Activated CD4-positive, alpha-beta T cell treated with anti-CD3 and anti-CD28 coated beads, Interleukin-2, amount 10 ng/mL, durations not matched to agents 24 days and 14 days (primary cell): ENCODE measurements at regions of chr2 and their contacts with region 1.

Region 1: DNA sequence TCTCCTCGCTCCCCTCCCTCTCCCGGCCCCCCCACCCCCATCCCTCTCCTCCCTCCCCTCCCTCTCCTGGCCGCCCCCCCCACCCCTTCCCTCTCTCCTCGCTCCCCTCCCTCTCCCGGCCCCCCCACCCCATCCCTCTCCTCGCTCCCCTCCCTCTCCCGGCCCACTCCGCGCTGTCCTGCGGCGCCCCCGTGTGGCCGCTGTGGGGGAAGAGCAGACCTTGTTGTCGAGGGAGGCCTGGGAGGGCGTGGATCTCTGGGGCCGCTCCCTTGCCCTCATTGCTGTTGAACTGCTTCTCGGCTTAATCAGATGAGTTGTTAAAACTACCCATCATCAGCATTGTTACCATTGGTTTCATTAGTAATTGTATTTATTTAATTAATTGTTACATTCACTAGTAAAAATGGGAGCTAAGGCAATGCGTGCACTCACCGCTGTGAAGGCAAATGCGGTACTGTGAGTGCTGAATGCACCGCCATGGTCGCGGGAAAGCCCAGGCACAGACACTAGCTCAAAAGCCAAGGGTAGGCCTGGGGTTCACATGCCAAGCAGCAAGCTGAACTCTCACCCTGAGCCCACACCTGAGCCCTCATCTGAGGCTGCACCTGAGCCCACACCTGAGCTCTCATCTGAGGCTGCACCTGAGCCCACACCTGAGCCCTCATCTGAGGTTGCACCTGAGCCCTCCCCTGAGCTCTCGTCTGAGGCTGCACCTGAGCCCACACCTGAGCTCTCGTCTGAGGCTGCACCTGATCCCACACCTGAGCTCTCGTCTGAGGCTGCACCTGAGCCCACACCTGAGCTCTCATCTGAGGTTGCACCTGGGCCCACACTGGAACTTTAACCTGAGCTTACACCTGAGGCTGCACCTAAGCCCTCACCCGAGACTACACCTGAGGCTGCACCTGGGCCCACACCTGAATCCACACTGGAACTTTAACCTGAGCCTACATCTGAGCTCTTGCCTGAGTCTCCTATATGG is 8.8 kb downstream of the RTP5 start:
- DNase-seq: peak; percentile 94
- H3K4me3 Mint-ChIP-seq: no peak overlapping the region
- H3K27ac Mint-ChIP-seq: no peak overlapping the region
- H3K4me1 Mint-ChIP-seq: peaks cover 26% of the 10 kb centered on the region
- H3K27me3 Mint-ChIP-seq: peaks cover 4% of the 10 kb centered on the region

Region 2: GRCh38 chr2:240250985-240251847 is 1627.1 kb before region 1 on chr2:
- intact Hi-C with region 1: no loop called
- DNase-seq: peak; percentile 46
- H3K4me3 Mint-ChIP-seq: no peak overlapping the region
- H3K27ac Mint-ChIP-seq: no peak overlapping the region
- H3K4me1 Mint-ChIP-seq: no peaks in the 10 kb centered on the region
- H3K27me3 Mint-ChIP-seq: no peaks in the 10 kb centered on the region

Region 3: GRCh38 chr2:240560480-240561326 is 1317.6 kb before region 1 on chr2:
- intact Hi-C with region 1: loop called (anchors 10 kb)
- DNase-seq: peak; percentile 100
- H3K4me3 Mint-ChIP-seq: peak overlapping the region; percentile 94
- H3K27ac Mint-ChIP-seq: peak overlapping the region; percentile 94
- H3K4me1 Mint-ChIP-seq: peaks cover 63% of the 10 kb centered on the region
- H3K27me3 Mint-ChIP-seq: no peaks in the 10 kb centered on the region

Region 4: GRCh38 chr2:241508240-241509154 is 369.8 kb before region 1 on chr2 and contains the start of gene STK25:
- intact Hi-C with region 1: loop called (anchors 1 kb)
- DNase-seq: peak; percentile 99
- H3K4me3 Mint-ChIP-seq: peak within 1 kb of the TSS; percentile 87
- H3K27ac Mint-ChIP-seq: peak within 1 kb of the TSS; percentile 72
- H3K4me1 Mint-ChIP-seq: peaks cover 13% of the 10 kb centered on the region
- H3K27me3 Mint-ChIP-seq: peaks cover 7% of the 10 kb centered on the region
- total RNA-seq, gene STK25: 121 and 145 TPM in 2 replicates

Region 5: DNA sequence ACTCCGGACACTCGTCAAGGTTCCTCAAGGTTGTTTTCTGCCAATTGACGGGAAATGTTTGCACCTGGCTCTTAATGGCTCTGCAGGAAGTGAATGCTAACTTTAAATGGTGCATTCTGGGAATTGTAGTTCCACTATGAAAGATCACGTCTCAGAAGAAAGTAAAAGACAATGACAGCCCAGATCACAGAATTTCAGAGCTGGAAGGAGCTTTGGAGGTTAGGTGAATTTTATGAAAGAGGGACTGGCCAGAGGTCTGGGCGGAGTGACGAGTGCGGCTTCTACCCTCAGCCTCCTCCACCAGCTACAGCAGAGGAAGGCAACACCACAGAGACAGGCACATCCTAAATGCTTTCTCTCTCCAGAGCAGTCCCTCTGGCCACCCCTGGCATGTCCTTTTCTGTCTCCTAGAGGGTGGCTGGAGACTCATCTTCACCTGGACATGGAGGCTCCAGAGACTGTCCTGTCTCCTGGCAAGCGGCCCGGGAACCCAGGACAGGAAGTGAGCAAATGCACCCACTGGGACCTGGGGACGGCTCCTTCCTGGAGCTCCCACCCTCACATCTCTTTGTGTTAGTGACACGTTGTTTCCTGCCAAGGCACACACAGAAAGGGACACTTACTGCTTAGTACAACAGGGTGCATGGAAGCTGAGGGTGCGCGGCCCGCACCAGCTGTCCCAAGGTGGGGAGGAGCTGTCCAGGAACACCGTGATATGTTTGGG is 260.7 kb before region 1 on chr2:
- intact Hi-C with region 1: loop called (anchors 5 kb)
- DNase-seq: peak; percentile 85
- H3K4me3 Mint-ChIP-seq: peak overlapping the region; percentile 86
- H3K27ac Mint-ChIP-seq: peak overlapping the region; percentile 97
- H3K4me1 Mint-ChIP-seq: peaks cover 36% of the 10 kb centered on the region
- H3K27me3 Mint-ChIP-seq: no peaks in the 10 kb centered on the region

Region 6: GRCh38 chr2:241702132-241703031 is 175.9 kb before region 1 on chr2:
- intact Hi-C with region 1: loop called (anchors 1 kb)
- DNase-seq: peak; percentile 95
- H3K4me3 Mint-ChIP-seq: peak overlapping the region; percentile 91
- H3K27ac Mint-ChIP-seq: peak overlapping the region; percentile 79
- H3K4me1 Mint-ChIP-seq: peaks cover 15% of the 10 kb centered on the region
- H3K27me3 Mint-ChIP-seq: no peaks in the 10 kb centered on the region

Region 7: GRCh38 chr2:241844066-241844728 is 34.1 kb before region 1 on chr2:
- intact Hi-C with region 1: loop called (anchors 1 kb)
- DNase-seq: peak; percentile 95
- H3K4me3 Mint-ChIP-seq: peak overlapping the region; percentile 73
- H3K27ac Mint-ChIP-seq: peak overlapping the region; percentile 89
- H3K4me1 Mint-ChIP-seq: peaks cover 34% of the 10 kb centered on the region
- H3K27me3 Mint-ChIP-seq: peaks cover 3% of the 10 kb centered on the region